Caco-2 (cell line): ENCODE measurements at regions of chr5 and their contacts with region 1.

Region 1: GRCh38 chr5:82387001-82387818 is 109.1 kb upstream of the RPS23 start:
- DNase-seq: peak; percentile 85 to 88
- H3K4me3 ChIP-seq: no peak overlapping the region
- H3K4me3 Mint-ChIP-seq: peak overlapping the region; percentile 54
- H3K27ac Mint-ChIP-seq: peak overlapping the region; percentile 73
- H3K4me1 ChIP-seq: peaks cover 23% of the 10 kb centered on the region
- H3K4me1 Mint-ChIP-seq: peaks cover 39% of the 10 kb centered on the region
- H3K27me3 ChIP-seq: no peaks in the 10 kb centered on the region
- H3K27me3 Mint-ChIP-seq: no peaks in the 10 kb centered on the region
- CTCF ChIP-seq: no peak

Region 2: GRCh38 chr5:82364497-82364896 is 22.7 kb before region 1 on chr5:
- CTCF ChIA-PET with region 1: interaction called, 3 read pairs
- POLR2A ChIA-PET with region 1: no interaction called
- intact Hi-C with region 1: loop called (anchors 1 kb)
- DNase-seq: peak in 1 of 2 experiments; percentile 26
- H3K4me3 ChIP-seq: no peak overlapping the region
- H3K4me3 Mint-ChIP-seq: no peak overlapping the region
- H3K27ac Mint-ChIP-seq: no peak overlapping the region
- H3K4me1 ChIP-seq: no peaks in the 10 kb centered on the region; the same call in 1 of the 2 replicates
- H3K4me1 Mint-ChIP-seq: peaks cover 9% of the 10 kb centered on the region
- H3K27me3 ChIP-seq: no peaks in the 10 kb centered on the region
- H3K27me3 Mint-ChIP-seq: no peaks in the 10 kb centered on the region
- CTCF ChIP-seq: peak in 1 of 2 experiments; percentile 40

Region 3: GRCh38 chr5:83577036-83577636 is 1189.9 kb after region 1 on chr5:
- CTCF ChIA-PET with region 1: no interaction called
- POLR2A ChIA-PET with region 1: no interaction called
- intact Hi-C with region 1: loop called (anchors 1 kb)
- DNase-seq: peak; percentile 82 to 89
- H3K4me3 ChIP-seq: no peak overlapping the region
- H3K4me3 Mint-ChIP-seq: peak overlapping the region; percentile 65
- H3K27ac Mint-ChIP-seq: peak overlapping the region; percentile 68
- H3K4me1 ChIP-seq: peaks cover 16% of the 10 kb centered on the region
- H3K4me1 Mint-ChIP-seq: peaks cover 20% of the 10 kb centered on the region
- H3K27me3 ChIP-seq: no peaks in the 10 kb centered on the region
- H3K27me3 Mint-ChIP-seq: no peaks in the 10 kb centered on the region
- CTCF ChIP-seq: no peak